Activated naive CD4-positive, alpha-beta T cell treated with anti-CD3 and anti-CD28 coated beads, Interleukin-2, amount 10 ng/mL, durations not matched to agents 7 days and 5 days (primary cell): ENCODE measurements at regions of chr9 and their contacts with region 1.

Region 1: DNA sequence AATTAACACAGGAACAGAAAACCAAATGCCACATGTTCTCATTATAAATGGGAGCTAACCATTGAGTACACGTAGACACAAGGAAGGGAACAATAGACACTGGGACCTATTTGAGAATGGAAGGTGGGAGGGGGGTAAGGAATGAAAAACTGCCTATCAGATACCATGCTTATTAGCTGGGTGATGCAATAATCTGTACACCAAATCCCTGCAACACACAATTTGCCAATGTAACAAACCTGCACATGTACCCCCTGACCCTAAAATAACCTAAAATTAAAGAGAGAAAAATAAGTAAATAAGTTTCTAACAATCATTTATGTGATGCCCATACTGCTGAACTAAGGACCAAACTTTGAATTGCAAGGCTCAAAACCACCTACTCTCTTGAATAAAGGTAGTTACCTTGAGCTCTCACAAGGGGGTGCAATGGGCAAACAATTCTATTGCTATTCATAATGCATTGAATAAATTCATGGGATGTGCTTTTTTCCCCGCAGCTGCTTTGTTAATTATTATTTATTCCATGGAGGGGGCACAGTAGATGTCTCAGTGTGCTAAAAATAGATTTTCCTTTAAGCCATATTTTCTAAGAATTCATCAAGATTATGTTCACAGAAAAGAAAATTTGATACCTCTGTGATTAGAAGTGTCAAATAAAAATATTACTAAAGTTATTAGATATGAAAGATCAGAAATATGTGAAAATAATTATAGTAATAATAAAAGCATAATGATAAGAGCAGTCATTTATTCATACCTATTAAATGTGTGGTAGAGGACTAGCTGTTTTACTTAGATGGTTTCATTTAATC is 76.2 kb upstream of the PTPN3 start:
- DNase-seq: peak; percentile 34
- H3K4me3 Mint-ChIP-seq: no peak overlapping the region
- H3K27ac Mint-ChIP-seq: no peak overlapping the region
- H3K4me1 Mint-ChIP-seq: no peaks in the 10 kb centered on the region
- H3K27me3 Mint-ChIP-seq: peaks cover 4% of the 10 kb centered on the region

Region 2: GRCh38 chr9:109549386-109549785 is 24.9 kb before region 1 on chr9:
- CTCF ChIA-PET with region 1: no interaction called
- DNase-seq: no peak
- H3K4me3 Mint-ChIP-seq: no peak overlapping the region
- H3K27ac Mint-ChIP-seq: no peak overlapping the region
- H3K4me1 Mint-ChIP-seq: no peaks in the 10 kb centered on the region
- H3K27me3 Mint-ChIP-seq: no peaks in the 10 kb centered on the region

Region 3: GRCh38 chr9:109640580-109641371 is 66.5 kb after region 1 on chr9:
- CTCF ChIA-PET with region 1: no interaction called
- DNase-seq: peak; percentile 20
- H3K4me3 Mint-ChIP-seq: no peak overlapping the region
- H3K27ac Mint-ChIP-seq: no peak overlapping the region
- H3K4me1 Mint-ChIP-seq: no peaks in the 10 kb centered on the region
- H3K27me3 Mint-ChIP-seq: peaks cover 58% of the 10 kb centered on the region

Region 4: GRCh38 chr9:109817846-109818472 is 243.7 kb after region 1 on chr9:
- CTCF ChIA-PET with region 1: interaction called, 30 read pairs
- DNase-seq: peak; percentile 59
- H3K4me3 Mint-ChIP-seq: no peak overlapping the region
- H3K27ac Mint-ChIP-seq: no peak overlapping the region
- H3K4me1 Mint-ChIP-seq: no peaks in the 10 kb centered on the region
- H3K27me3 Mint-ChIP-seq: no peaks in the 10 kb centered on the region

Region 5: DNA sequence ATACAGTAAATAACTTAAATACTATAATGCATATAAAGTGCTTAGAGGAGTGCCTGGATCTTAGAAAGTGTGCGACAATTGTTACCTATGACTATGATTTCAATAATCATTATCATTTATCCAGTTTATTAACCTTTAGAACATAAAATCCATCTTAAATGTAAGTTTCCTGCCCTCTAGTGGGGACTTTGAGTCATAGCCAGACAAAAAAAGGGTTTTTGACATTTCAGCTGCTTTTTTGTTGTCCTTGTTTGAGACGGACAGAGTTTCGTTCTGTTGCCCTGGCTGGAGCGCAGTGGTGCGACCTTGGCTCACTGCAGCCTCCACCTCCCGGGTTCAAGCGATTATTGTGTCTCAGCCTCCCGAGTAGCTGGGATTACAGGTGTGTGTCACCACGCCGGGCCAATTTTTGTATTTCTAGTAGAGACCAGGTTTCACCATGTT is 643.4 kb after region 1 on chr9:
- CTCF ChIA-PET with region 1: interaction called, 10 read pairs
- DNase-seq: no peak
- H3K4me3 Mint-ChIP-seq: no peak overlapping the region
- H3K27ac Mint-ChIP-seq: no peak overlapping the region
- H3K4me1 Mint-ChIP-seq: peaks cover 11% of the 10 kb centered on the region
- H3K27me3 Mint-ChIP-seq: peaks cover 25% of the 10 kb centered on the region